ENCODE measurements at regions of chr10 and their contacts with region 1.

Region 1: GRCh38 chr10:102835007-102835482 is 2.2 kb downstream of the CYP17A1 start:
- DNase-seq: peak; percentile 82
- H3K4me3 Mint-ChIP-seq: no peak overlapping the region
- H3K27ac Mint-ChIP-seq: no peak overlapping the region
- H3K4me1 Mint-ChIP-seq: peaks cover 3% of the 10 kb centered on the region
- H3K27me3 Mint-ChIP-seq: peaks cover 3% of the 10 kb centered on the region

Region 2: GRCh38 chr10:102713814-102714620 is 121.0 kb before region 1 on chr10 and contains the start of gene ARL3:
- CTCF ChIA-PET with region 1: no interaction called
- POLR2A ChIA-PET with region 1: no interaction called
- intact Hi-C with region 1: no loop called
- DNase-seq: peak; percentile 99
- H3K4me3 Mint-ChIP-seq: peak within 1 kb of the TSS; percentile 84
- H3K27ac Mint-ChIP-seq: peak within 1 kb of the TSS; percentile 85
- H3K4me1 Mint-ChIP-seq: peaks cover 63% of the 10 kb centered on the region
- H3K27me3 Mint-ChIP-seq: no peaks in the 10 kb centered on the region
- total RNA-seq, gene ARL3: 10.1 to 11.1 TPM

Region 3: DNA sequence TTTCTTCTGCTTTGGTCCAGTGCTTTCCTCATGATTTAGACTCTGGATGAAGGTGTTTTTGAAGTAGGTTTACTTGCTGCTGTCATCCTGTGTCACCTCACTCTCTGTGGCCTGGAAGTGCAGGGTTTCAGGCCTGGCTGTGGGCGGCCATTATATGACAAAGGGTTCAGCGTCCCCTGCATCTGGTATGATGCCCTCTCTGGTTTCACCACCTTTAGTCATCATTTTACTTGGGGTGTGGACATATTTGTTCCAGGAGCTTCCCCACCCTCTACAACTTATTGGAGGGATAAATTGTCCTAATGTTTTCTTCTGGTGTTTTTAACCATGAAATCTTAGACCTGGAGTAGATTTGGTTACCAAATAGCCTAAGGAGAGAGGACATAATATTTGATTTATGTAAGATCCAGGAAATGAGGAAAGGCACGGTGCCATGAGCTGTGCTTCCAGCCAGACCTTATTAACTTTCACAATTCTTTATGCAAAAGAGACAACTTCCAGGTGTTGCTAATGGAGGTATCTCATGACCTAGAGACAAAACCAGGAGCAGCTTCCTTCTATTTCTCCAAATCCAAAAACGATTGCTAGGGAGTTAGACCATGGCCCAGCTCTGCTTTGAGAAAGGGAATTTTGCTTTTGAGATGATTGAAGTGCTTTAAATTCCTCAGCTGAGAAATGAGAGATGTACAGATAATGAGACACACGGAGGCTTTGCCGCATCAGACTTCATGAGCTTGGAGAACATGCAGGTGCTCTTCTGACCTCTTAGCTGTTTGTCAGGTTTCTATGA is 70.5 kb before region 1 on chr10:
- CTCF ChIA-PET with region 1: no interaction called
- POLR2A ChIA-PET with region 1: no interaction called
- intact Hi-C with region 1: no loop called
- DNase-seq: peak; percentile 25
- H3K4me3 Mint-ChIP-seq: no peak overlapping the region
- H3K27ac Mint-ChIP-seq: no peak overlapping the region
- H3K4me1 Mint-ChIP-seq: peaks cover 32% of the 10 kb centered on the region
- H3K27me3 Mint-ChIP-seq: no peaks in the 10 kb centered on the region

Region 4: DNA sequence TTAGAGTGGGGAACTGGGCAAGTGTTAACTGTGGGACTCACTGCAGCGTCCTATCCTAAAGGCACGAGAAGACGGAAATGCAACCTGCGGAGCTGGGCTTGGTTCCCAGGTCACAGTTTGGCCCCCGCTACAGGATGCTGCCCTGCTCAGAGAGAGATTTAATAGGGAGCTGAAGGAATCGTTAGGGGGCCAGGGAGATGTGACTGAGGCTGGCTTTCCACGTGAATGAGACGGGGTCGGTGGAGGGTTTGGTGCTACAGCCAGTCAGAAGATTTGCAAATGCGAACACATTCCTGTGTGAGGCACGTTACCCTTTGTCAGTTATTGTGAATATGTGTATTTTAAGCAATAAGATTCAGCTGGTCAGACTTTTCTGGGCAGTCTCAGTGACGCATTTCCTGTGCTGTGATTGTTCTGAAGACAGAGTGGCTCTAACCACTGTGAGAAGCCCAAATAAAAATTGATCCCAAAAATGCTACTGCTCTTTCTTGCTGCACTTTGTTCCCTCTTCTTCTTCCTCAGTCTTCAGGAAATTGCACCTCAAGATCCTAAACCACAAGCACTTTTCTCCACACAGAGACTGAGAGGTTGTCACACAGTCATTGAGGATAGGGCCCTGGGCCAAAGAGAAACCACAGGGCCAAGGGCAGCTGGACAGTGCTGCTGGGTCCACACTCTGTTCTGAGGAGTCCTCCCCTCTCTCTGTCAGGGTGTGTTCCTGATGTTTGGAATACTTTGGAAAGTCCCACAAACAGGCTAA is 19.1 kb before region 1 on chr10:
- CTCF ChIA-PET with region 1: no interaction called
- POLR2A ChIA-PET with region 1: no interaction called
- intact Hi-C with region 1: no loop called
- DNase-seq: no peak
- H3K4me3 Mint-ChIP-seq: no peak overlapping the region
- H3K27ac Mint-ChIP-seq: no peak overlapping the region
- H3K4me1 Mint-ChIP-seq: no peaks in the 10 kb centered on the region
- H3K27me3 Mint-ChIP-seq: no peaks in the 10 kb centered on the region

Region 5: DNA sequence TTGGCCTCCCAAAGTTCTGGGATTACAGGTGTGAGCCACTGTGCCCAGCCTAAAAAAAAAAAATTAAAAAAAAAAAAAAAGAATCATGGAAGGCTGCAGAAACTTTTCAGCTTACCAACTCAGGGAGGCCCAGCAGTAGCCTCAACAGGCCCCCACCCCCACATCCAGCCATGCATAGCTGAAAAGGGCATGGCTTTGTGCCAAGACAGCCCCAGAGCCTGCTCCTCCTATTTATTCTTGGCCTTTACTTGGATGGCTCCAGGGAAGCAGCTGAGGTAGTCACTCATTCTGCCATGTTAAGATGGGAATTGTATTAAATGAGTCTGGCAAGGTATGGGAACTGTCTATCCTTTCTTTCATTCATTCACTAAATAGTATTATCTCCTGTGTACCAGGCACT is 69.3 kb after region 1 on chr10:
- CTCF ChIA-PET with region 1: interaction called, 59 read pairs
- POLR2A ChIA-PET with region 1: no interaction called
- intact Hi-C with region 1: loop called (anchors 1 kb)
- DNase-seq: no peak
- H3K4me3 Mint-ChIP-seq: no peak overlapping the region
- H3K27ac Mint-ChIP-seq: no peak overlapping the region
- H3K4me1 Mint-ChIP-seq: no peaks in the 10 kb centered on the region
- H3K27me3 Mint-ChIP-seq: no peaks in the 10 kb centered on the region

Region 6: DNA sequence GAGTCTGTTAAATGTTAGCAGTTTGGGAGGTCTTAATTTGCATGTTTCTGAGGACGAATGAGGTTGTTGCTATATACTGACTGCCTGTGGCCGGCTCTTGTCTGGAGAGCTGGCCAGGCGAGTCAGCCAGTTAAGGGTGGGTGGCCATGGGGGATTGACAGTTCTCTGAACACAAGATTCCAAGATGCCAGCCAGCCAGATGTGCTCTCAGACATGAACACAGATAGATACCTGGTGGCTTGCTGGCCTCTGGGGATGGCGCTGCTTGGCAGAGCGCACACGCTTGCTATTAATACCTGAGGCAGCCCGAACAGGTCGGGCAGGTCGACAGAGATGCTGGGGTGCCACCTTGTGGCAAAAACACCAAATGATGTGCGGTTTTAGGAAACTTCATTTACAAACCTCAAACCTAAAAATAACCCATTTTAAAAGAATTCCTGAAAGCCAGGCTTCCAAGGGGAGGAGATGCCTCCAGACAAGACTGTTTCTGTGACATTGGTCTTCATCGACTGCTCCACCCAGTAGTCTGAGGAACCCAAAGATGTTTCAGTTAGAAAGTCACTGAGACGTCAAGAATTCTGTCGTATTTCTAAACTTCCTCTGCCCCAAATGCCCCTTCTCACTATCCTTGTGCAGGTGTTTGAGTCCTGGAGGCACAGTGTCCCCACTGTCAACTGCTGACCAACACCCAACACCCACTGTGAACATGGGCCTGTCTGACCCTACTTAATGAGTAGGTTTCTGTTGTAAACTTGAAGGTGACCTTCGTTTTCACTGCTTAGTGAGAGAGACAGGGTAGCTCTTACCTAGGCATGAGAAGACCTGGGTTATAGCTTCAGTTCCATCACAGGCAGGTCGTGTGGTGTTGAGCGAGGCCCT is 234.6 kb after region 1 on chr10:
- CTCF ChIA-PET with region 1: interaction called, 7 read pairs
- POLR2A ChIA-PET with region 1: no interaction called
- intact Hi-C with region 1: loop called (anchors 1 kb)
- DNase-seq: peak; percentile 80
- H3K4me3 Mint-ChIP-seq: no peak overlapping the region
- H3K27ac Mint-ChIP-seq: no peak overlapping the region
- H3K4me1 Mint-ChIP-seq: peaks cover 19% of the 10 kb centered on the region
- H3K27me3 Mint-ChIP-seq: no peaks in the 10 kb centered on the region

Region 7: DNA sequence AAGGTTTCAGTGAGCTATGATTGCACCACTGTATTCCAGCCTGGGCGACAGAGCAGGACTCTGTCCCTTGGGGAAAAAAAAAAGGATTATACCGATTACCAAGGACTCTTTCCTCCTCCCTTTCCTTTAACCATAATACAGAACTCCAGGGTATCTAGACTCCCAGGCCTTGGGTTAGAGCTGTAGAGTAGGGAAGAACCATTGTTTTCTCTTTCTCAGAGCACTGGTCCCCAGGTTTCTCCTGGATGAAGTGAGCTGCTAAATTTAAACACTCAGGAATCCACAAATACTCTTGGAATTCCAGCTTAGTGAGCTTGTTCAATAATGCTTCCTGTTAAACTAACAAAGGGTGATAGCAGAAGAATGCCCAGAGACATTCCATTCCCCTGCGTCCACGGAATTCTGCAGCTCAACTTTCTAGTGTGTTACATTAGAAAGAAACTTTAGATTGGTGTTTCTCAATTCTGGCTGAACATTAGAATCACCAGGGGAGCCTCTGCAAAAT is 396.1 kb after region 1 on chr10:
- CTCF ChIA-PET with region 1: no interaction called
- POLR2A ChIA-PET with region 1: no interaction called
- intact Hi-C with region 1: no loop called
- DNase-seq: no peak
- H3K4me3 Mint-ChIP-seq: no peak overlapping the region
- H3K27ac Mint-ChIP-seq: no peak overlapping the region
- H3K4me1 Mint-ChIP-seq: no peaks in the 10 kb centered on the region
- H3K27me3 Mint-ChIP-seq: no peaks in the 10 kb centered on the region

Region 8: DNA sequence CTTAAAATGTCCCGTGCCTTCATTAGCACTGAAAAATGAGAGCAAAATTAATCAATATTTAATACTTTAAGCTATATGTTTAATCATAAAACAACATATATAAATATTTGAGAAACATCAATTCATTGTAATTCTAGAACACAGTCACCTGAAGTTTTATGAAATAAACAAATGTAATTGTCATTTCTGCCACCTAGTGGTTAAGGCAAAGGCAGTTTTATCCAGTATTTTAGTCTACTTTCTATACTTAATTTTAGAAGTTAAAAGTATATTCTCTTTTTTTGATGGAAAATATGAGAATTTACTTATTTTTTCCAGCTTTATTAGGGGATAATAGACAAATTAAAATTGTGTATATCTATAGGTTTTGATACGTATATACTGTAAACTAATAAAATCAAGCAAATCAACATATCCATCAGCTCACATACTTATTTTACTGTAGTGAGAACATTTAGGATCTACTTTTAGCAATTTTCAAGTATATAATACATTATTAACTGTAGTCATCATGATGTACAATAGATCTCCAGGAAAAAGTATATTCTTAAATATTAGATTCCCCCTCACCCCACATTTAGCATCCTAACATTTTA is 499.0 kb after region 1 on chr10:
- CTCF ChIA-PET with region 1: interaction called, 13 read pairs
- POLR2A ChIA-PET with region 1: no interaction called
- intact Hi-C with region 1: no loop called
- DNase-seq: no peak
- H3K4me3 Mint-ChIP-seq: no peak overlapping the region
- H3K27ac Mint-ChIP-seq: no peak overlapping the region
- H3K4me1 Mint-ChIP-seq: no peaks in the 10 kb centered on the region
- H3K27me3 Mint-ChIP-seq: no peaks in the 10 kb centered on the region